H1 (cell line): ENCODE measurements at regions of chr10 and their contacts with region 1.

Region 1: GRCh38 chr10:96642973-96643372 is 56.2 kb upstream of the TM9SF3 start:
- DNase-seq: peak; percentile 13 to 82
- H3K4me3 ChIP-seq: no peak overlapping the region
- H3K27ac ChIP-seq: no peak overlapping the region
- H3K4me1 ChIP-seq: no peaks in the 10 kb centered on the region
- H3K27me3 ChIP-seq: no peaks in the 10 kb centered on the region
- CTCF ChIP-seq: peak in 2 of 3 experiments; percentile 85 to 89; a peak in 3 of 4 replicates
- EP300 ChIP-seq: no peak
- POLR2A ChIP-seq: no peak
- RAD21 ChIP-seq: peak; percentile 81 to 87

Region 2: GRCh38 chr10:96548589-96548988 is 94.4 kb before region 1 on chr10:
- CTCF ChIA-PET with region 1: no interaction called
- POLR2A ChIA-PET with region 1: no interaction called
- DNase-seq: no peak
- H3K4me3 ChIP-seq: no peak overlapping the region
- H3K27ac ChIP-seq: no peak overlapping the region
- H3K4me1 ChIP-seq: no peaks in the 10 kb centered on the region
- H3K27me3 ChIP-seq: no peaks in the 10 kb centered on the region
- CTCF ChIP-seq: no peak
- EP300 ChIP-seq: no peak
- POLR2A ChIP-seq: no peak
- RAD21 ChIP-seq: no peak

Region 3: DNA sequence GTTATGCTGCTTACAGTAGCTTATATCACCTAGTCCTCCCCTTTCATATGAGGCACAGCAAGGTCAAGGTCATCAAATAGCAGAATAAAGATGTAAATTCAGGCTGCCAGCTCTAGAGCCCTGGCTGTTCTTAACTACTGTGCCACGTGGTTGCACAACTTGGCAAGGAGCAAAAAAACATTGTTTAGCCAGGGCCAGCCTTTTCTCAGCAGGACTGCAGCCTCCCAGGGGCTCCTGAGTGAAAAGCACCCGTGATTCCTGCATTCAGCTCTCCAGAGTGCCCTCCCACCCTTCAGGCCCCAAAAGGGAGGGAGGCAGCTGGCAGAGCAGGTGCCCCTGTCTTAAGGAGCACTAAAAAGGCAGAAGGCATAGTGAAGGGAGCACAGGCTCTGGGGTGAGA is 24.3 kb before region 1 on chr10:
- CTCF ChIA-PET with region 1: interaction called, 13 read pairs
- POLR2A ChIA-PET with region 1: no interaction called
- DNase-seq: no peak
- H3K4me3 ChIP-seq: no peak overlapping the region
- H3K27ac ChIP-seq: no peak overlapping the region
- H3K4me1 ChIP-seq: peaks cover 0 to 4% (median 0%) of the 10 kb centered on the region in 4 experiments; a peak in 2 of 7 replicates
- H3K27me3 ChIP-seq: no peaks in the 10 kb centered on the region
- CTCF ChIP-seq: no peak
- EP300 ChIP-seq: no peak
- POLR2A ChIP-seq: no peak
- RAD21 ChIP-seq: no peak

Region 4: DNA sequence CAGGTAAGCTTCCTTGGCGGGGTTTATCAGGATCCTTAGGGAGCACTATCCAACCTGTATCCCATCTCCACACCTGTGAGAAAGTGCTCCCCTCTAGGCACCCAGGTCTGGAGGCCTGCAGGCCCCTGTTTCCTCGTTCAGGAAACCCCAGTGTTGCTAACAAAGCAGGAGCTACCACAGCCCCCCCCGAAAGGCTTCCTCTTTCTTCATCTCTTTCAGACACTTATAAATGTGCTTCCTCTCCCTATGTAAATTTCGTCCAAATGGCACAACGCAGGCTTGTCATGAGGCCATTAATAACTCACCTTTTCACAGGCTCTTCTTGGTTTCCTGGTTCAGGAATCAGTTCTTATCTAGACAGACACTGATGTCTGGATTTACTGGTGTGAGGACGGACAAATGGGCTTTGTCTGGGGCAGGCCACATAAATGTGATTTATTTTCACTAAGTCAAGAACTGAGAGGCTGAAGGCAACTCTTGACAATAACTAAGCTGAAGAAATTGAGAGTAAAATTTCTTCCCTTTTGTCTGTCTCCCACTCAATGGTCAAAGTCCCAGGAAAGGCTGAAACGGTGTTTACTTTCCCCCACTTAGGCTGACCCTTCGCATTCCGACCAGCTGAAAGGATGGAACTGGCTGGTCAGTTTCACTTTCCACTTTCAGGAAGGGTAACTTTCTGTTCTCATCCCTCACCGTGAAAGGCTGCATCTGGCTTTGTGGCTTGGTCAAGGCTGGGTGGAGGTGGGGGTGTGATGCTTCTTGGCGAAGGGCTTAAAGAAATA is 30.5 kb after region 1 on chr10:
- CTCF ChIA-PET with region 1: interaction called, 20 read pairs
- POLR2A ChIA-PET with region 1: no interaction called
- DNase-seq: no peak
- H3K4me3 ChIP-seq: no peak overlapping the region
- H3K27ac ChIP-seq: no peak overlapping the region
- H3K4me1 ChIP-seq: no peaks in the 10 kb centered on the region
- H3K27me3 ChIP-seq: no peaks in the 10 kb centered on the region
- CTCF ChIP-seq: no peak
- EP300 ChIP-seq: no peak
- POLR2A ChIP-seq: no peak
- RAD21 ChIP-seq: no peak

Region 5: DNA sequence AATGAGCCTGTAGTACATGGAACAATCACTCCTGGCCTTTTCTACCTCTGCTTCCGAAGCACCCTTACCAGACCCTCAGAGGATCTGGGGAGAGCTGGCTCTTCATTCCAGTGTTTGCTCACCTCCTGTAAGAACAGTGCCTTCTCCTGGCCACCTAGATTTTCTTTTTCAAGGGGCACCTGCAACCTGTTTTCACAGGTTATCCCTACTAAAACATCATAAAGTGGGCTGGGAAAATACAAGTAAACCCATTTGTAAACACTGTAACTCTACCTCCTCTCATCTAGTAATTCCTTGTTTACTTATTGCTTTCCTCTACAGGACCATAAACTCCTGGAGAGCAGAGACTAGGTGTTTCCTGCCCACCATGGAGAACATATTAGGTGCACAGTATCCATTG is 76.2 kb after region 1 on chr10:
- CTCF ChIA-PET with region 1: interaction called, 18 read pairs
- POLR2A ChIA-PET with region 1: no interaction called
- DNase-seq: no peak
- H3K4me3 ChIP-seq: peak overlapping the region in 1 of 4 experiments; percentile 80; a peak in 2 of 8 replicates
- H3K27ac ChIP-seq: no peak overlapping the region
- H3K4me1 ChIP-seq: peaks cover 0 to 6% (median 3%) of the 10 kb centered on the region in 4 experiments; a peak in 5 of 7 replicates
- H3K27me3 ChIP-seq: peaks cover 0 to 8% (median 2%) of the 10 kb centered on the region in 4 experiments; a peak in 3 of 7 replicates
- CTCF ChIP-seq: no peak
- EP300 ChIP-seq: no peak
- POLR2A ChIP-seq: no peak
- RAD21 ChIP-seq: 0 out of 4 replicates have a peak, but pooled peaks of 1 of the 2 experiments have one; percentile 7

Region 6: GRCh38 chr10:96743988-96744585 is 101.1 kb after region 1 on chr10:
- CTCF ChIA-PET with region 1: interaction called, 14 read pairs
- POLR2A ChIA-PET with region 1: interaction called, 4 read pairs
- DNase-seq: no peak
- H3K4me3 ChIP-seq: no peak overlapping the region
- H3K27ac ChIP-seq: no peak overlapping the region
- H3K4me1 ChIP-seq: no peaks in the 10 kb centered on the region
- H3K27me3 ChIP-seq: no peaks in the 10 kb centered on the region
- CTCF ChIP-seq: peak in 1 of 3 experiments; percentile 33; a peak in 2 of 4 replicates
- EP300 ChIP-seq: no peak
- POLR2A ChIP-seq: no peak
- RAD21 ChIP-seq: peak; percentile 58 to 59

Region 7: DNA sequence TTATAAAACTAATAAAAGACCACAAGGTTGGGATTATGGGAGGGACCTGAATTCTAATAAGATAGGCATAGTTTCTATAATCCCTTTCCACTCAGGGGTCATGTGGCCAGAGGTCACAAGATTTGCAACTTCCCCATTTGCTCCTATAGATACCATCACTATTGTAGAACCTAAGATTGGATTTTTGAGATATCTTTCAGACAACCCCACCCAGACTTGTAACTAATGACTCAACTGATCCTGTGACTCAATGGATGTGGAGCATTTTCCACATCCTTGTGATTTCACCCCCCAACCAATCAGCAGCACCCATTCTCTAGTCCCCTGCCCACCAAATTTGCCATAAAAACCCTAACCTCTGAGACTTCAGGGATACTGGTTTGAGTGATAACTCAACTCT is 129.2 kb after region 1 on chr10:
- CTCF ChIA-PET with region 1: no interaction called
- POLR2A ChIA-PET with region 1: no interaction called
- DNase-seq: no peak
- H3K4me3 ChIP-seq: no peak overlapping the region
- H3K27ac ChIP-seq: no peak overlapping the region
- H3K4me1 ChIP-seq: no peaks in the 10 kb centered on the region
- H3K27me3 ChIP-seq: no peaks in the 10 kb centered on the region
- CTCF ChIP-seq: no peak
- EP300 ChIP-seq: no peak
- POLR2A ChIP-seq: no peak
- RAD21 ChIP-seq: no peak

Region 8: DNA sequence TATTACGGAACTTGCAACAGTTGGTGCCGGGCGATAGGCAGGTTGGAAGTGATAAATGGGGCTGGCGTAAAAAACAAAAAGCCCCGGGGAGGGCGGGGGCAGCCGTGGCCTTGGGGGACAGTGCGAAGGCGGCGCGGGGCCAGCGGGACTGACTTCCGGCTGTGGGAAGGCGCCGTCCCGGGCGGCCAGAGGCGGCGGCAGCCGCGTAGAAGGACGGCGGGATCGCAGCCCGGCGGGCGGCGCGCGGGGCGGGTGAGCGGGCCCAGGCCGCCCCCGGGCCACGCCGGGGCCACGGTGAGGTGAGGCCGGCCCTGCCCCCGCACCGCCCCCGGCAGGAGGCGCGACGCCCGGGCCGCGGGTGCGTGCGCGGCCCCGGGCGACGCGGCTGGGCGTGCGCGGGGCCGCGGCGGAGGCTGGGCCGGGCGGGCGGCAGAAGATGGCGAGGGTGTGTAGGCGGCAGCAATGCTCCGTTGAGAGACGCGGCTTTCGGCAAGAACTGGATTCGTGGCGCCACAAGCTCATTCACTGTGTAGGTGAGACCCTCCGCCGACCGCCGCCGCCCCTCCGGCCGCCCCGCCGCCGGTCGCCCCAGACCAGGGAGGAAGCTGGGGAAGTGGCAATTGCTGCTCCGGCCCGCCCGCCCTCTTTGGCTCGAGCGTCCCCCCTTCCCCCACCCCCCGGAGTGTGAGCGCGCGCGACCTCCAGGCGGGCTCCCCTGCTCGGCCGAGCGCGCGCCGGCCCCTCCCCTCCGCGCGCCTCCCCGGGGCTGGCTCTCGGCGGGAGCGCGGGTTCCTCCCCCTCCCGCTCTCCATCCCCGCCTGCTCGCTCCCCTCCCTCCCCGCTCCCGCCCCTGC is 189.1 kb after region 1 on chr10 and contains the start of gene LCOR:
- CTCF ChIA-PET with region 1: interaction called, 57 read pairs
- POLR2A ChIA-PET with region 1: interaction called, 3 read pairs
- DNase-seq: peak in 1 of 2 experiments; percentile 86
- H3K4me3 ChIP-seq: peak within 1 kb of the TSS; percentile 73 to 91 (median 88)
- H3K27ac ChIP-seq: peak within 1 kb of the TSS; percentile 83; the same call in 1 of the 2 replicates
- H3K4me1 ChIP-seq: peaks cover 0 to 3% (median 0%) of the 10 kb centered on the region in 4 experiments; a peak in 2 of 7 replicates
- H3K27me3 ChIP-seq: no peaks in the 10 kb centered on the region; a peak in 1 of 7 replicates
- CTCF ChIP-seq: no peak
- EP300 ChIP-seq: no peak
- POLR2A ChIP-seq: peak; percentile 71 to 83
- RAD21 ChIP-seq: no peak
- total RNA-seq, gene LCOR: 21.9 and 25.5 TPM in 2 replicates

Region 9: GRCh38 chr10:97096261-97097083 is 453.5 kb after region 1 on chr10:
- CTCF ChIA-PET with region 1: no interaction called
- POLR2A ChIA-PET with region 1: no interaction called
- DNase-seq: no peak
- H3K4me3 ChIP-seq: no peak overlapping the region
- H3K27ac ChIP-seq: no peak overlapping the region
- H3K4me1 ChIP-seq: peaks cover 0 to 15% (median 7%) of the 10 kb centered on the region in 4 experiments; a peak in 5 of 7 replicates
- H3K27me3 ChIP-seq: no peaks in the 10 kb centered on the region
- CTCF ChIP-seq: no peak
- EP300 ChIP-seq: no peak
- POLR2A ChIP-seq: no peak
- RAD21 ChIP-seq: no peak